Right lobe of liver (tissue), 6 donors: ENCODE measurements at regions of chr3 and their contacts with region 1.

Region 1: GRCh38 chr3:132343018-132343612 is 25.9 kb downstream of the ACP3 start:
- DNase-seq: peak in 1 of 3 donors; percentile 50
- ATAC-seq: peak; percentile 84 to 91 (median 88)
- H3K4me3 ChIP-seq: no peak overlapping the region
- H3K27ac ChIP-seq: no peak overlapping the region
- H3K4me1 ChIP-seq: peaks cover 0 to 5% (median 0%) of the 10 kb centered on the region in 4 donors
- H3K27me3 ChIP-seq: no peaks in the 10 kb centered on the region
- CTCF ChIP-seq: peak; percentile 73 to 85 (median 79)
- POLR2A ChIP-seq: no peak

Region 2: GRCh38 chr3:132253262-132253878 is 89.7 kb before region 1 on chr3:
- intact Hi-C with region 1: loop called in 1 of 2 experiments (anchors 5 kb)
- DNase-seq: no peak
- ATAC-seq: peak; percentile 72 to 86 (median 78)
- H3K4me3 ChIP-seq: no peak overlapping the region
- H3K27ac ChIP-seq: no peak overlapping the region
- H3K4me1 ChIP-seq: no peaks in the 10 kb centered on the region
- H3K27me3 ChIP-seq: no peaks in the 10 kb centered on the region
- CTCF ChIP-seq: peak; percentile 55 to 75 (median 68)
- POLR2A ChIP-seq: no peak